AG04450 (cell line): ENCODE measurements at regions of chr11 and their contacts with region 1.

Region 1: GRCh38 chr11:10808553-10809372 is at the start of gene EIF4G2:
- DNase-seq: peak; percentile 98
- H3K4me3 ChIP-seq: peak within 1 kb of the TSS; percentile 93
- H3K27ac ChIP-seq: peak within 1 kb of the TSS; percentile 98
- H3K27me3 ChIP-seq: no peaks in the 10 kb centered on the region
- CTCF ChIP-seq: no peak
- polyA plus RNA-seq, gene EIF4G2: 1,244 and 1,432 TPM in 2 replicates

Region 2: DNA sequence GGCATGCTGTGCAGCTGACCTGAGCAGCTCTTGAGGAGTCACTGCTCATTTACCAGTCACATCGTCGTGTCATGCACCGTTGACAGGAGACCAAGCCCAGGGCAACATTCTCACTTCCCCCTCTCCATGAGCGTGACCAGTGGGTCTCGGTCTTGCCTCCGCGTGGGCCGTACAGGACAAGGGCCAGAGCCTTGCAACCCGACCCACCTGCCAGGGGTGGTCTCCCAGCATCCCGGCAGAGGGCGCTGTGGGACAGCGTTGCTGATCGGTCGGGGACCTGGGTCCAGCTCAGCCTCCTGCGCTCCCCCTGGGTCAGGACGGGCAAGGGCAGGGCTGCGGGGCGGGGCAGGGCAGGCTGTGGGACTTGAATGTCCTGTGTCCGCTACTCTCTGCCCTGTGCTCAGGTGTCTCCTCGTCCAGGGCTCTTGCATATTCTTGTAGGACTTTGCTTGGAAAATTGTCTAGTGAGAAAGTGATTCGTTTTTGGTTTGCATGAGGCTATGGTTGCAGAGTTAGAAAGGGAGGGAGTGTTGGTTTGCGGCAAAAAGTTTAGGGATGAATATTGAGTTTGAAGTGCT is 16.3 kb before region 1 on chr11:
- CTCF ChIA-PET with region 1: interaction called, 11 read pairs
- POLR2A ChIA-PET with region 1: interaction called, 32 read pairs
- DNase-seq: peak; percentile 32
- H3K4me3 ChIP-seq: peak overlapping the region; percentile 30; the same call in 1 of the 2 replicates
- H3K27ac ChIP-seq: no peak overlapping the region
- H3K27me3 ChIP-seq: no peaks in the 10 kb centered on the region
- CTCF ChIP-seq: peak; percentile 85

Region 3: DNA sequence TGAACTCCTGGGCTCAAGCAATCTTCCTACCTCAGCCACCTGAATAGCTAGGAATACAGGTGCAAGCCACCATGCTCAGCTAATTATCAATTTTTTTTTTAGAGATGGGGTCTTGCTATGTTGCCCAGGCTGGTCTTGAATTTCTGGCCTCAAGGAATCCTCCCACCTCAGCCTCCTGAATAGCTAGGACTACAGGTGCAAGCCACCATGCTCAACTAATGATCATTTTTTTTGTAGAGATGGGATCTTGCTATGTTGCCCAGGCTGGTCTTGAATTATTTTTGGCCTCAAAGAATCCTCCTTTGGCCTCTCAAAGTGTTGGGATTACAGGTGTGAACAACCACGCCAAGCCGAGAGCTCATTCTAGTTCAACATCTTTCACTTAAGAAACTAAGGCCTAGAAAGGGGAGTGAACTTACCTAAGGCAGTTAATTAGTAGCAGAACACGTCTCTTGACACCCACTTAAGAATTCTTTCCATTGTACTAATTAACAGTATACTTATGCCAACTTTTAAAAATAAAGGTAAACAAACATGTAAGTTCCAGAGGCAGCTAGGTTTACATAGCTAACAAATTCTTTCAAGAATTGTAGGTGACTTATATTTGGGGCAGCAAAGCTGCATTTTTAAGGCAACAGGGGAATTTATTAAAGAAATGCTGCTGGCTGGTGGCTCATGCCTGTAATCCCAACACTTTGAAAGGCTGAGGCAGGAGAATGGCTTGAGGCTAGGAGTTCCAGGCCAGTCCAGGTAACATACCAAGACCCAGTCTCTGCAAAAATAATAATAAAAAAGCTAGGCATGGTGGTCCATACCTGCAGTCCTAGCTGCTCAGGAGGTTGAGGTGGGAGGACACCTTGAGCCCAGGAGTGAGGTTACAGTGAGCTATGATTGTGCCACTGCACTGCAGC is 39.5 kb after region 1 on chr11:
- CTCF ChIA-PET with region 1: no interaction called
- POLR2A ChIA-PET with region 1: interaction called, 17 read pairs
- DNase-seq: no peak
- H3K4me3 ChIP-seq: no peak overlapping the region
- H3K27ac ChIP-seq: no peak overlapping the region
- H3K27me3 ChIP-seq: no peaks in the 10 kb centered on the region
- CTCF ChIP-seq: no peak

Region 4: GRCh38 chr11:10893714-10894151 is 85.0 kb after region 1 on chr11:
- CTCF ChIA-PET with region 1: no interaction called
- POLR2A ChIA-PET with region 1: interaction called, 101 read pairs
- DNase-seq: peak; percentile 62
- H3K4me3 ChIP-seq: no peak overlapping the region
- H3K27ac ChIP-seq: peak overlapping the region; percentile 72
- H3K27me3 ChIP-seq: no peaks in the 10 kb centered on the region
- CTCF ChIP-seq: peak; percentile 62

Region 5: DNA sequence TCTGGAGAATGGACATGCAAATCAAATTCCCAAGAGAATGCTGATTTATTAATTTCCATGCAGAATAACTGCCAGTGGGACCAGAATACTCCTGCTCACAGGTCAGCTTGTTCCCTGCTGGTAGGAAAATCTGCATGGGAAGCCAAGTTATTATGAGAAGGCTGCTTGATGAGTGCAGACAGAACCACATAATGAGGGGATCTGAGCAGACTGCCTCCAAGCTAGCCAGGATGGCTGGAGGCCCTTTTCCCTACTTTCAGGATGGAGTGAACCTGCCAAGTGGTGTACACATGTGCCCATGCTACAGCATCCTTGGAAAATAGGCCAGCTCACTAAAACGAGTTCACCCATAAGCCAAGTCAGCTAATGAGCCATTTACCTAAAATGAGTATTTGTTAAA is 104.3 kb after region 1 on chr11:
- CTCF ChIA-PET with region 1: interaction called, 4 read pairs
- POLR2A ChIA-PET with region 1: interaction called, 11 read pairs
- DNase-seq: no peak
- H3K4me3 ChIP-seq: no peak overlapping the region
- H3K27ac ChIP-seq: no peak overlapping the region
- H3K27me3 ChIP-seq: no peaks in the 10 kb centered on the region
- CTCF ChIP-seq: no peak